A549 (cell line): ENCODE measurements at regions of chr6 and their contacts with region 1.

Region 1: DNA sequence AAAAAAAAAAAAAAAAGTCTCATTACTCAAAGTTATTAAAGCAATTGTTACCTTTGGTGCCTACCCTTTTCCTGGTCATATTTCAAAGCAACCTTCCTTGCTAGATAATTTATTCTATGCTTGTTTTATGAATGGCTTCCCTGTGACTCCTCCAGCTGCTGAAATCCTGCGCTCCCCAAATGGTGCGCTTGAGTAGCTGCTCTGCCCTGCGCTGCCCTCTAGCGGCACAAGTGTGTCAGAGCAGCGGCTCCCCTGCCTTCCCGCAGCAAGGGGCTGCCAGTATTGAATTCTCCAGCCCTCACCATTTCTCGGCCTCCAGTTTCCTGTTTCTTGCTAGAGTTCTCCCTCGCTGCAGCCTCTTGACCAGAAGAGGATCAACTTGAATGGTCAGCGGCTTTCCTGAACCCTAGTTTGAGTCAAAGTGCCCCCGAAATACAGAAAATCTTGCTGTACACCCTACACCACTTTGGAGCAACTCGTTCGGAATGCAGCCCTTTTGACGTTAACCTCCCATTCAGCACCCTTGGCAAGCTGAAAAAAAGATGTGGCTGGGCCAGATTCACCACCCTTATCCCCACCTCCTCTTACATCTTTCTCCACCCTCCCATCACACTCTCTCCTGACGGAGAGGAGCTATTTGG is 60.4 kb upstream of the KLHL31 start:
- DNase-seq: peak; percentile 66 to 74
- ATAC-seq: peak; percentile 94 to 95
- H3K4me3 ChIP-seq: peak overlapping the region; percentile 40
- H3K27ac ChIP-seq: peak overlapping the region; percentile 31 to 52; a peak in 4 of 6 replicates
- H3K4me1 ChIP-seq: peaks cover 13% of the 10 kb centered on the region; the same call in 2 of the 3 replicates
- CTCF ChIP-seq: peak; percentile 78
- EP300 ChIP-seq: no peak
- POLR2A ChIP-seq: no peak
- RAD21 ChIP-seq: peak; percentile 77 to 80

Region 2: DNA sequence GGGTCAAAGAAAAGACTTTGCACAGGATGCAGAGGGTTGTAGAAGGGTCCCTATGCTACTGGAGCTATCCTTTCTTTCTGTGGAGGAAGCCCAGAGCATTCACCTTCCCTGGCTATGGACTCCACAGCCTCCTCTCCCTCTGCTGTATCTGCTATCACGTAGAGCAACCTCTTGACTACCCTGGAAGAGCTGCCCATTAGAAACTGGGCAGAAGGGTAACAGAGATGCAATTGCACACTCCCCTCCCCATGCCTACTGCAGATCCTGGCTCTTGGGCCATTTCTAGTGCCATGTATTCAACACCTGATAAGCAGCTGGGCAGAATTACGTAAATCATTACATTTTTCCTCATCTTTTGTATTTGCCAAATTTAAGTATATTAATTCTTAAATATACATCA is 63.5 kb before region 1 on chr6:
- CTCF ChIA-PET with region 1: interaction called, 10 read pairs
- POLR2A ChIA-PET with region 1: no interaction called
- DNase-seq: no peak
- ATAC-seq: no peak; a peak in 1 of 6 replicates
- H3K4me3 ChIP-seq: no peak overlapping the region
- H3K27ac ChIP-seq: no peak overlapping the region
- H3K4me1 ChIP-seq: peaks cover 13% of the 10 kb centered on the region; the same call in 1 of the 3 replicates
- CTCF ChIP-seq: no peak
- EP300 ChIP-seq: no peak
- POLR2A ChIP-seq: no peak
- RAD21 ChIP-seq: no peak

Region 3: GRCh38 chr6:53710788-53711187 is 15.1 kb before region 1 on chr6:
- CTCF ChIA-PET with region 1: interaction called, 14 read pairs
- POLR2A ChIA-PET with region 1: no interaction called
- DNase-seq: no peak
- ATAC-seq: no peak
- H3K4me3 ChIP-seq: no peak overlapping the region
- H3K27ac ChIP-seq: no peak overlapping the region
- H3K4me1 ChIP-seq: no peaks in the 10 kb centered on the region
- CTCF ChIP-seq: no peak
- EP300 ChIP-seq: no peak
- POLR2A ChIP-seq: no peak
- RAD21 ChIP-seq: no peak

Region 4: GRCh38 chr6:53744334-53744733 is 18.4 kb after region 1 on chr6:
- CTCF ChIA-PET with region 1: interaction called, 12 read pairs
- POLR2A ChIA-PET with region 1: no interaction called
- DNase-seq: no peak
- ATAC-seq: no peak
- H3K4me3 ChIP-seq: no peak overlapping the region
- H3K27ac ChIP-seq: no peak overlapping the region
- H3K4me1 ChIP-seq: 0 out of 3 replicates have a peak, but pooled peaks cover 3% of the 10 kb centered on the region
- CTCF ChIP-seq: no peak
- EP300 ChIP-seq: no peak
- POLR2A ChIP-seq: no peak
- RAD21 ChIP-seq: no peak

Region 5: DNA sequence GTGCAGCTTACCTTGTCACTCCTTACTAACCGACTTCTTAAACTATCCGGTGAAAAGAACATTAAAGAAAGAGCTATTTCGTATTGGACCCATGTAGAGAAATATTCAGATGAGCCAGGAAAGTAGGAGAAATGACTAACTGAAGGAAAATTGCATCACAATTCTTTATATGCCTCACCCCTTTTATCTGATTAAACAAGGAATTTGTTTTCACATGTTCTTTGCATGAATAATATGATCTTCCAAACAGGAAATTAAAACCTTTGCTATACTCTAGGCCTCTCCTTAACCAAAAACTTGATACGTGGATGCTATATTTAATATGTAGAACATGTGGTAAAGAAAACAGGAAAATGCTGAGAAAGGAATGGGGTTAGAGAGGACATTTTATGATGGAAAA is 26.9 kb after region 1 on chr6:
- CTCF ChIA-PET with region 1: interaction called, 11 read pairs
- POLR2A ChIA-PET with region 1: no interaction called
- DNase-seq: no peak
- ATAC-seq: no peak
- H3K4me3 ChIP-seq: no peak overlapping the region
- H3K27ac ChIP-seq: no peak overlapping the region
- H3K4me1 ChIP-seq: peaks cover 6% of the 10 kb centered on the region; the same call in 2 of the 3 replicates
- CTCF ChIP-seq: no peak
- EP300 ChIP-seq: no peak
- POLR2A ChIP-seq: no peak
- RAD21 ChIP-seq: no peak

Region 6: GRCh38 chr6:53761036-53761435 is 35.1 kb after region 1 on chr6:
- CTCF ChIA-PET with region 1: interaction called, 10 read pairs
- POLR2A ChIA-PET with region 1: no interaction called
- DNase-seq: no peak
- ATAC-seq: no peak
- H3K4me3 ChIP-seq: no peak overlapping the region
- H3K27ac ChIP-seq: no peak overlapping the region
- H3K4me1 ChIP-seq: no peaks in the 10 kb centered on the region
- CTCF ChIP-seq: no peak
- EP300 ChIP-seq: no peak
- POLR2A ChIP-seq: no peak
- RAD21 ChIP-seq: no peak

Region 7: DNA sequence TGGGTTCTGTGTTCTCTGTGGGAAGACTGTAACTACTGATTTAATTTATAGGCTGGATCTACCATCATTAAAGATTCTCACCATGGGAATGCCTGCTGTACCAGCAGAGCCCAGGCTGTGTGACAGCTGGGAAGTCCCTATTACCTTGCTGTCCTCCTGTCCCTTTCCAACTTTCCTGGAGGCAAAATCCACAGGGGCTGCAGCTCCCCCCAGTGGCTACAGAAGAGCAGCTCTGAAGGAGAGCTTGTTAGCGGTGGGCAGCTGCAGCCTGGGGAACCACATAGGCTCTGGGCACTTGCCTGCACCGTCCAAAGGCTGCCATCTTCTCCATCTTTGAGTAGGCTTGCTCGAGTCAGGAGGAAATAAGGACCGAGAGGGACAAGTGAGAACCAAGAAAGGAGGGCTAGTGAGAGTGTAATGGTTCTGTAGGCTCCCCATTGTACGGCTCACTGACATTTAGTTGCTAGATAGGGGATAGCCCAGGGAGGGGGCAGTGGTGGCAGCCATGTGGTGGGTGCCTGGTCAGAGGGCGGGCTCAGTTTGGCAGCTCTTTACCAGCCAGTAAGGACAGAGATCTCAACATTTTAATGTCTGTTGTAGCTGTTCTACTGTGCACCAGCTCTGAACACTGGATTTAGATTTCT is 230.3 kb after region 1 on chr6:
- CTCF ChIA-PET with region 1: interaction called, 55 read pairs
- POLR2A ChIA-PET with region 1: no interaction called
- DNase-seq: peak; percentile 56 to 74
- ATAC-seq: peak; percentile 99 to 100
- H3K4me3 ChIP-seq: no peak overlapping the region
- H3K27ac ChIP-seq: no peak overlapping the region
- H3K4me1 ChIP-seq: no peaks in the 10 kb centered on the region
- CTCF ChIP-seq: peak; percentile 61
- EP300 ChIP-seq: no peak
- POLR2A ChIP-seq: no peak
- RAD21 ChIP-seq: peak; percentile 80 to 84